ENCODE measurements at regions of chr5 and their contacts with region 1.

Region 1: GRCh38 chr5:14685757-14686156 is 21.2 kb downstream of the OTULIN start:
- DNase-seq: no peak
- ATAC-seq: peak; percentile 56

Region 2: DNA sequence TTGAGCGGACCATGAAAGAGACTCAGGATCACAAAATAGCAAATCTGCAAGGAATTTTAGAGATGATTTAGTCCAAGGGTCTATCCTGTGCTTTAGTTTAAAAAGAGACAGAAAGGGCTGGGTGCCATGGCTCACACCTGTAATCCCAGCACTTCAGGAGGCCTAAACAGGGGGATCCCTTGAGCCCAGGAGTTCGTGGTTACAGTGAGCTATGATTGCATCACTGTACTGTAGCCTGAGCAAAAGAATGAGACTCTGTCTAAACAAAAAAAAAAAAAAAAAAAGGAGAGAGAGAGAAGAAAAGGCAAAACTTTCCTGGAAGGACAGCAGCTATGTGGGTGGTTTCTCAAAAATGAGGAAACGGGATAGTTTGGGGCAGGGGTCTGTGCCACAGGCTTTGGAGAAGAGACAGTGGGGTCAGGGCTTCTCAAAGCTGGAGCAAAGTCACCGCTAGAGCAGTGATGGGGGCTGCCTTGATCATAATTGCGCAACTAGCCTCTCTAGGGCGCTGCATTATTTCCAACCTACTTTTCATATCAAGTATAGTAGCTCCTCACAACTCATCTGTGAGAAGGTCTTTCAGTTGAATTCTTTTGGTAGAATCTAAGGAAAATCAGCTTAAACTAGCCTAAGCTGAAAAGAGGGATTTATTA is 194.3 kb after region 1 on chr5:
- intact Hi-C with region 1: no loop called
- DNase-seq: no peak
- ATAC-seq: no peak

Region 3: DNA sequence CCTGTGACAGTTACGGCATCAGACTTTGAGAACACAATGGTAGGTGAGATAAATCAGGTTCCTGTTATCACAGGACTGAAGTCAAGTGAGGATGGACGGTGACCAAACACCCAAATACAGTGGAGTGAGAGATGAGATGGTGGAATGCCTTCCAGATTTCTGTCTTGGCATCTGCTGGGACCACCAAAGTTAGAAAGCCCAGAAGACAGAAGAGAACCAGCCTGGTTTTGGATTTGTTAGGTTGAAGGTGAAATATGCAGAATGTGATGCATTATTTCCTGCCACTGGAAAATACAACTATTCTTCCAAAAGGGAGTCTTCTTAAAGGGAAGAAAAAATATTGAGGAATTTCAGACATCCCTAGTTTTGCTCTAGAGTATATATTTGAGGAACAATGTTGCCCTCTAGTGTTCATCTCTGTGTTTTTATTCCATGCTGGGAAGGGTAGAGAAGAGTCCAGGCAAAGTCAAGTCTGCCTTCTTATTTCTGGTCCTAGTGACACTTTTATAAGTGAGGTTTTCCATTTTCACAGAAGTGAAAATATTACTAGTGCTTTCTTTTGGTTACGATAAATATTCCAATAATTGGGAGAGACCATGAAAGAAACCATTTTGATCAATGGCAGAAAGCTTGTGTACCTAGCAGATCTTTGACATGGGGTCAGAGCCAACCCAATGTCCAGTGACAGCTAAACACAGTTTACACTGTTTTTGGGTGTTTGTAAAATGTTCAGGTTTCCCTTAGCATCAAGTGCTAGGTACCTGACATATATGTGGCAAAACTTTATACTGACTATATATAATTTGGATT is 328.1 kb after region 1 on chr5:
- intact Hi-C with region 1: loop called (anchors 5 kb)
- DNase-seq: no peak
- ATAC-seq: peak; percentile 87

Measured in Right ventricle myocardium superior (tissue), 1 donor.